ENCODE measurements at regions of chr20 and their contacts with region 1.

Region 1: GRCh38 chr20:50561379-50562078 is 51.3 kb downstream of the PTPN1 start:
- DNase-seq: no peak
- ATAC-seq: peak in 1 of 2 donors; percentile 77

Region 2: DNA sequence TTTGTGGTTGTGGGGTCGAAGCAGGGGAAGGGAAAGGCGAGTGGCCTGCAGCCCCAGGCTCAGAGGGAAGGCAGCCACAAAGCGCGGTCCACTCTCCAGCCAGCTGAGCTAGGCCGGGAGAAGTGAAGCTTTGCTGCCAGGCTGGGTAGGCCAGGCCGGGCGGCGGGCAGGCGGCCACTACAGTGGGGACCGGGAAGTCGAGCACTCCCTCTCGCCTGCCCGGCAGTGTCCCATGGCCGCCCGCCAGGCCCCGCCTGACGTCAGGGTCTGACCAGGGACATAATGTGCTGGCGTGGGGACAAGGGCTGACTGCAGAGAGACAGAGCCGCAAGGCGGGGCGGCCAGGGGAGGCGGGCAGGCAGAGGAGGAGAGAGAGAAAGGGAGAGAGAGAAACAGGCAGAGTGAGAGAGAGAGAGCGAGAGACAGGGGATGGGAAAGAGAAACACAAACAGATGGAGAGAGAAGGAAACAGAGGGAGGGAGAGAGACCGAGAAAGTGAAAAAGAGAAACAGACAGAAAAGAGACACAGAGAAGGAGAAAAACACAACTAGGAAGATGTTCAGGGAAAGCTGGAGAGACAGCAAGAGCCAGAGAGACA is 145.9 kb before region 1 on chr20:
- intact Hi-C with region 1: no loop called
- DNase-seq: peak; percentile 100
- ATAC-seq: peak; percentile 96 to 98

Region 3: GRCh38 chr20:50509935-50510705 is 51.4 kb before region 1 on chr20 and contains the start of gene PTPN1:
- intact Hi-C with region 1: no loop called
- DNase-seq: peak; percentile 99
- ATAC-seq: peak; percentile 99
- total RNA-seq, gene PTPN1: 22.8 to 40.4 TPM

Region 4: DNA sequence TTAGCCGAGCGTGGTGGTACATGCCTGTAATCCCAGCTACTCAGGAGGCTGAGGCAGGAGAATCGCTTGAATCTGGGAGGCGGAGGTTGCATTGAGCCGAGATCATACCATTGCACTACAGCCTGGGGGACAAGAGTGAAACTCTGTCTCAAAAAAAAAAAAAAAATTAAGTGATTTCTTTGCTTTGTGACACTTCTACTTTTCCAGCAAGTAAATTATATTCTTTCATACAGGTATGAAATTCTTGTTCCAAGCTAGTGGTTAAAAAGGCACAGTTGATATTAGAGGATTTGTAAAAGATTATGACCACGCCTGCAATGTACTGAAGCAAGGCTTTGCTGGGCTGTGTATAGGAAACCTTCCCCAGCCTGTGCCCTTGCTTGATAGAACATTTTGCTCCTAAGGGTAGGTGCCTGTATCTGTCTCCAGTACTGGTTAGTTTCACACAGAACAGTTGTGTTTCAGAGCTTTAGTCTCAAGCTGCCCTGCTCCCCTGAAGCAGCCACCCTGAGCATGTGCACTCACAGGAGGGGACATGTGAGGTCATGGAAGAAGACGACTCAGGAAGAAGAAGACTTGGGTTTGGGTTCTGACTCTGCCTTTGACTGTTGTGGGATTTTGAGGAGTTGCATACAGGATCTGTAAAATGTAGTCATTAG is 41.2 kb before region 1 on chr20:
- intact Hi-C with region 1: loop called in 1 of 2 experiments (anchors 5 kb)
- DNase-seq: no peak
- ATAC-seq: no peak

Region 5: GRCh38 chr20:51156041-51156982 is 594.8 kb after region 1 on chr20:
- intact Hi-C with region 1: no loop called
- DNase-seq: no peak
- ATAC-seq: peak; percentile 81 to 88